Endothelial cell of umbilical vein (primary cell): ENCODE measurements at regions of chr4 and their contacts with region 1.

Region 1: DNA sequence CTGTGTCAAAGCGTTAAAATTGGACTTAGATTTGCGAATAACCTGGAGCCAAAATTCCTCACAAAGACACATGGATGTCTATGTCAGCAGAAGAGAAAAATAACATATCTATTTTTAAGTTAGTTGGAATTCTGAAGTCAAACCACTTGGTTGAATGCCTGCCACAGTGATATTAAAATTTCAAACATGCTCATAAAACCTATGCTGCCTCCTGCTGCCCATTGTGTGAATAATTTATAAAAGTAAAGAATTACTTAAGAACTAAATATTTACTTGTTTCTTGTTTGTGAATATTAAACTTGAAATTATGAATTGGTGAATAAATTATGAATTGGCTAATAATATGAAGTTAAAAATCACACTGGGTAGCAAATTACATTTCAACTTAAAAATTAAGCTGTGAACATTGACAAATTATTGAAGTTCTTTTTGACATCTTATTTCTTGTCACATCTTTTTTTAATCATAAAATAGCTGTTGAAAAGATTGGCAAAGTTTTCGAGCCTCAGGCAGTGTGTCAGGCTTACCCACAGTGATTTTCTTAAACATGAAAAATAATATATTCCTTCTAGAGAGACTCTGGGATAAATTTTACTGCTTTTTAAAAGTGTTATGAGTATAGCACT is 35.4 kb downstream of the FABP2 start:
- DNase-seq: peak; percentile 83
- H3K4me3 ChIP-seq: no peak overlapping the region
- H3K27ac ChIP-seq: no peak overlapping the region
- H3K4me1 ChIP-seq: peaks cover 44% of the 10 kb centered on the region
- H3K27me3 ChIP-seq: no peaks in the 10 kb centered on the region
- CTCF ChIP-seq: peak; percentile 27 to 28
- POLR2A ChIP-seq: no peak

Region 2: DNA sequence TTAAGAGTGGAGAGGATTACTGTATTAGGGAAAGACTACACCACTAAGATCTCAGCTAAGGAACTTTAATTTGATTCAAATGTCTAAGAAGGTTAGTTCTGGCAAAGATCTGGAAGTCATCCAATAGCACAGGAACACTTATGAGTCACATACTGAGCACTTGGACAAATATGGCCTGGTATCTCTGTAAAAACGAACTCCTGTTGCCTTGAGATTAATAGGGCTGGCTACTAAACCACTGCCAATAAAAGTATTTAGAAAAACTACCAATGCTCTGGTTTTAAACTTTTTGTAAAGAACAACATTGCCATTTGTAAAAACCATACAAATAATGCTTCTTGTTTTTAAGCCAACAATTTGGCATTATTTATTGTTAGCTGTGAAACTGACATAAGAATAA is 521.1 kb before region 1 on chr4:
- CTCF ChIA-PET with region 1: no interaction called
- POLR2A ChIA-PET with region 1: no interaction called
- dilution Hi-C with region 1: no loop called
- intact Hi-C with region 1: loop called (anchors 10 kb)
- DNase-seq: peak; percentile 92
- H3K4me3 ChIP-seq: no peak overlapping the region
- H3K27ac ChIP-seq: no peak overlapping the region
- H3K4me1 ChIP-seq: peaks cover 29% of the 10 kb centered on the region
- H3K27me3 ChIP-seq: no peaks in the 10 kb centered on the region
- CTCF ChIP-seq: no peak
- POLR2A ChIP-seq: no peak

Region 3: GRCh38 chr4:119041951-119042560 is 244.4 kb before region 1 on chr4:
- CTCF ChIA-PET with region 1: interaction called, 23 read pairs
- POLR2A ChIA-PET with region 1: no interaction called
- dilution Hi-C with region 1: no loop called
- intact Hi-C with region 1: loop called (anchors 1 kb)
- DNase-seq: peak; percentile 86
- H3K4me3 ChIP-seq: no peak overlapping the region
- H3K27ac ChIP-seq: no peak overlapping the region
- H3K4me1 ChIP-seq: peaks cover 15% of the 10 kb centered on the region
- H3K27me3 ChIP-seq: no peaks in the 10 kb centered on the region
- CTCF ChIP-seq: peak; percentile 50
- POLR2A ChIP-seq: no peak

Region 4: GRCh38 chr4:119087121-119087520 is 199.4 kb before region 1 on chr4:
- CTCF ChIA-PET with region 1: interaction called, 12 read pairs
- POLR2A ChIA-PET with region 1: no interaction called
- dilution Hi-C with region 1: no loop called
- intact Hi-C with region 1: loop called (anchors 1 kb)
- DNase-seq: peak; percentile 53
- H3K4me3 ChIP-seq: no peak overlapping the region
- H3K27ac ChIP-seq: no peak overlapping the region
- H3K4me1 ChIP-seq: no peaks in the 10 kb centered on the region
- H3K27me3 ChIP-seq: no peaks in the 10 kb centered on the region
- CTCF ChIP-seq: peak; percentile 14 to 22
- POLR2A ChIP-seq: no peak

Region 5: DNA sequence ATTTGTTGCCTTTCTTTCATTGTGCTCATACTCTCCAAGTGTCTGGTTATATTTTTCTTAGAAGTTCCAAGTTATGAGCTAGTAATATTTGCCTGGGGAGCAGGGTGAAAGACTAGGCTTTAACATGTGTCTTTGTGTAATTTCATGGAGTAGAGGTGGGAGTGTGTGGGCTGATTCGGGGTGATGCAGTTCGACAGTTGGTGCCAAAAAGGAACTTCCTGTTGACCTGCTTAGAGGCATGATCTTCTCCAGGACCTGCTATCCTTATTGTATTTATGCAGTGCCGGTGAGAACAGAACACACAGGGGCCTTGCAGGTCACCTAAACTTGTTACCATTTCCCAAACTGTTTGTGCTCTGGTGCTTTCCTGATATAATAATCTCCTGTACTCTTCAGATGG is 52.7 kb before region 1 on chr4:
- CTCF ChIA-PET with region 1: no interaction called
- POLR2A ChIA-PET with region 1: no interaction called
- dilution Hi-C with region 1: no loop called
- intact Hi-C with region 1: loop called (anchors 5 kb)
- DNase-seq: peak; percentile 68
- H3K4me3 ChIP-seq: no peak overlapping the region
- H3K27ac ChIP-seq: peak overlapping the region; percentile 37
- H3K4me1 ChIP-seq: peaks cover 35% of the 10 kb centered on the region
- H3K27me3 ChIP-seq: no peaks in the 10 kb centered on the region
- CTCF ChIP-seq: no peak
- POLR2A ChIP-seq: no peak

Region 6: GRCh38 chr4:119271361-119272085 is 15.0 kb before region 1 on chr4:
- CTCF ChIA-PET with region 1: no interaction called
- POLR2A ChIA-PET with region 1: no interaction called
- dilution Hi-C with region 1: no loop called
- intact Hi-C with region 1: no loop called
- DNase-seq: peak; percentile 82
- H3K4me3 ChIP-seq: no peak overlapping the region
- H3K27ac ChIP-seq: peak overlapping the region; percentile 38
- H3K4me1 ChIP-seq: peaks cover 13% of the 10 kb centered on the region
- H3K27me3 ChIP-seq: no peaks in the 10 kb centered on the region
- CTCF ChIP-seq: no peak
- POLR2A ChIP-seq: no peak